ENCODE measurements at regions of chr11 and their contacts with region 1.

Region 1: GRCh38 chr11:92500493-92500892 is 275.9 kb downstream of the FAT3 start:
- DNase-seq: no peak
- H3K4me3 ChIP-seq: no peak overlapping the region
- H3K4me3 Mint-ChIP-seq: no peak overlapping the region
- H3K27ac Mint-ChIP-seq: no peak overlapping the region
- H3K4me1 ChIP-seq: no peaks in the 10 kb centered on the region
- H3K4me1 Mint-ChIP-seq: no peaks in the 10 kb centered on the region
- H3K27me3 ChIP-seq: no peaks in the 10 kb centered on the region; the same call in 1 of the 2 replicates
- H3K27me3 Mint-ChIP-seq: peaks cover 14% of the 10 kb centered on the region
- CTCF ChIP-seq: no peak

Region 2: GRCh38 chr11:92527467-92527866 is 27.0 kb after region 1 on chr11:
- CTCF ChIA-PET with region 1: no interaction called
- POLR2A ChIA-PET with region 1: no interaction called
- intact Hi-C with region 1: loop called (anchors 2 kb)
- DNase-seq: no peak
- H3K4me3 ChIP-seq: no peak overlapping the region
- H3K4me3 Mint-ChIP-seq: no peak overlapping the region
- H3K27ac Mint-ChIP-seq: no peak overlapping the region
- H3K4me1 ChIP-seq: no peaks in the 10 kb centered on the region
- H3K4me1 Mint-ChIP-seq: peaks cover 4% of the 10 kb centered on the region
- H3K27me3 ChIP-seq: no peaks in the 10 kb centered on the region
- H3K27me3 Mint-ChIP-seq: peaks cover 3% of the 10 kb centered on the region
- CTCF ChIP-seq: no peak

Region 3: DNA sequence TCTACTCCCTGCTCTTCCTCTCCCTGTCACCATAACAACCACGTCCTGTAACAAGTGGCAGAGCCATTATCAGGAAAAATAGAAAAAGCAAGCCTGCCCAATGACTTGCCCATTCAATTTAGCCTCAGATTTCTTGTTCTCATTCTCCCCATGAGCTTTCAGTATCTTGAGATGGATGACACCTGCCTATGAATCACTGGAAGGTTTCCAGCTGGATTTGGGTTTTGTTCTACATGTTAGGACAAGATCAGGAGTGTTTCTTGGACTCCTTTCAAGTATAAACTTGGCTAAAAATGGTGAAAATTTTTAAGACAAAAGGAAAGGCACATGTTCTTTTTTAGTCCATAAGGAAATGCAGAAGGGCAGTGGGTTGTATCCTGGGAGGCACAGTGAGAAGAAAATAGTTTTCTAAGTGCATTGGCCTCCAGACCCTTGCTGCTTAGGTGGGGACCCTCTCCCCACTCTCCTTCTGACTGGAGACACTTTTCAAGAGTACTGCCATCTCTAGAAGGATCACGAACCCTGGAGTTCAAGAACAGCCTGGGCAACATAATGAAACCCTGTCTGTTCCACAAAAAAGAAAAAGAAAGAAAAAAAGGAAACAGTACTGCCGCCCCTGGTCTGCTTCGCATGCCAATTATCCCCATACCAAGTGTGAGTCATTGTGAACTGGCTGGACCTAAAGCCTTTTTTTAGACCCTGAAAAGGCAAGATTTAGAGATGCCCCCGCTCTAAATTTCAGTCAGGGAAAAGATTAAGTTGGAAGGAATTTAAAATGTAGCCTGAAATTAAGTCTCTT is 520.0 kb after region 1 on chr11:
- CTCF ChIA-PET with region 1: no interaction called
- POLR2A ChIA-PET with region 1: no interaction called
- intact Hi-C with region 1: no loop called
- DNase-seq: no peak
- H3K4me3 ChIP-seq: no peak overlapping the region
- H3K4me3 Mint-ChIP-seq: no peak overlapping the region
- H3K27ac Mint-ChIP-seq: no peak overlapping the region
- H3K4me1 ChIP-seq: no peaks in the 10 kb centered on the region
- H3K4me1 Mint-ChIP-seq: no peaks in the 10 kb centered on the region
- H3K27me3 ChIP-seq: no peaks in the 10 kb centered on the region
- H3K27me3 Mint-ChIP-seq: peaks cover 6% of the 10 kb centered on the region
- CTCF ChIP-seq: no peak

Measured in Caco-2 (cell line).